ENCODE measurements at regions of chr1 and their contacts with region 1.

Region 1: GRCh38 chr1:39646232-39647081 is 7.0 kb upstream of the HEYL start:
- DNase-seq: peak; percentile 90

Region 2: GRCh38 chr1:39625462-39626273 is 20.8 kb before region 1 on chr1:
- intact Hi-C with region 1: loop called (anchors 2 kb)
- DNase-seq: peak; percentile 88

Region 3: DNA sequence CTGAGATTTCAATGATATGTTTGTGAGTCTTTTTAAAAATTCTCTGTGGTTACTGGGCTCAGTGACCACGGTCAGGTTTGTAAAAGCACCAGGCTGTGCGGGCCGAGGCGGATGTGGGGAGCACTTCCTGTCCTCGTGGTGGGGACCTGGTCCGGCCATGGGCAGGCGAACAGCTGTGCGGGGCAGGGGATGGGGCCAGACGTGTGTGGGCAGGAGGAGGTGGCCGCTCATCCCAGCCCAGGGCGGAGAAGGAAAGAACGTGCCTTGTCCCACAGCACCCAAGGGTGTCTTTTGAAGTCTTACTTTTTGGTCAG is 129.9 kb after region 1 on chr1:
- intact Hi-C with region 1: no loop called
- DNase-seq: peak; percentile 57